K562 (cell line): ENCODE measurements at regions of chrX and their contacts with region 1.

Region 1: GRCh38 chrX:150715184-150715583 is 22.0 kb downstream of the MTMR1 start:
- DNase-seq: no peak
- ATAC-seq: no peak
- H3K4me3 ChIP-seq: no peak overlapping the region
- H3K27ac ChIP-seq: no peak overlapping the region
- H3K4me1 ChIP-seq: no peaks in the 10 kb centered on the region
- H3K27me3 ChIP-seq: no peaks in the 10 kb centered on the region
- CTCF ChIP-seq: no peak
- EP300 ChIP-seq: no peak
- POLR2A ChIP-seq: no peak
- RAD21 ChIP-seq: no peak

Region 2: DNA sequence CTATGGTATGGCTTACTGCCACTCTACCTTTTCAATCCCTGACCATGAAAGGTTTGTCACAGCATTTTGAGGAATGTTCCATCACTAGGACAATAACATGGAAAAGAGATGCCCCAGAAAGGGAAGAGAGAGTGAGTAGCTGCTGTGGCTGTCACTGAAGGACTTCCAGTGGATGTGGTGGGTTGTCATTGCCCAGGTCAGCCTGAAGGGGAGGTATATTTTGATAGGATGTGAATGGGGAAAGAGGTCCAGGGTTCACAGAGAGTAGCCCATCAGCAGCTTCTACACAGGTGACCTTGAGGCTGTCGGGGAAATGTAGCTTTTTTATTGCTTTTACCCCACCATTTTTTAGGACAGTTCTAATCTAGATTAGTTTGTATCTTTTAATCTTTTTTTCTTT is 116.0 kb before region 1 on chrX:
- CTCF ChIA-PET with region 1: no interaction called
- POLR2A ChIA-PET with region 1: no interaction called
- in situ Hi-C with region 1: no loop called
- intact Hi-C with region 1: loop called (anchors 10 kb)
- DNase-seq: peak in 1 of 4 experiments; percentile 8
- ATAC-seq: peak; percentile 46; the same call in 1 of the 3 replicates
- H3K4me3 ChIP-seq: no peak overlapping the region
- H3K27ac ChIP-seq: no peak overlapping the region
- H3K4me1 ChIP-seq: no peaks in the 10 kb centered on the region
- H3K27me3 ChIP-seq: no peaks in the 10 kb centered on the region
- CTCF ChIP-seq: no peak
- EP300 ChIP-seq: no peak
- POLR2A ChIP-seq: no peak
- RAD21 ChIP-seq: no peak